ENCODE measurements at regions of chr12 and their contacts with region 1.

Region 1: GRCh38 chr12:91355150-91356006 is 172.8 kb upstream of the DCN start:
- DNase-seq: peak; percentile 68
- H3K4me3 ChIP-seq: no peak overlapping the region
- H3K27ac ChIP-seq: no peak overlapping the region
- H3K4me1 ChIP-seq: no peaks in the 10 kb centered on the region
- H3K27me3 ChIP-seq: no peaks in the 10 kb centered on the region
- CTCF ChIP-seq: peak; percentile 87

Region 2: GRCh38 chr12:90940872-90941499 is 414.4 kb before region 1 on chr12:
- CTCF ChIA-PET with region 1: interaction called, 10 read pairs
- POLR2A ChIA-PET with region 1: no interaction called
- intact Hi-C with region 1: no loop called
- DNase-seq: peak; percentile 81
- H3K4me3 ChIP-seq: no peak overlapping the region
- H3K27ac ChIP-seq: no peak overlapping the region
- H3K4me1 ChIP-seq: no peaks in the 10 kb centered on the region
- H3K27me3 ChIP-seq: no peaks in the 10 kb centered on the region
- CTCF ChIP-seq: peak; percentile 77

Region 3: DNA sequence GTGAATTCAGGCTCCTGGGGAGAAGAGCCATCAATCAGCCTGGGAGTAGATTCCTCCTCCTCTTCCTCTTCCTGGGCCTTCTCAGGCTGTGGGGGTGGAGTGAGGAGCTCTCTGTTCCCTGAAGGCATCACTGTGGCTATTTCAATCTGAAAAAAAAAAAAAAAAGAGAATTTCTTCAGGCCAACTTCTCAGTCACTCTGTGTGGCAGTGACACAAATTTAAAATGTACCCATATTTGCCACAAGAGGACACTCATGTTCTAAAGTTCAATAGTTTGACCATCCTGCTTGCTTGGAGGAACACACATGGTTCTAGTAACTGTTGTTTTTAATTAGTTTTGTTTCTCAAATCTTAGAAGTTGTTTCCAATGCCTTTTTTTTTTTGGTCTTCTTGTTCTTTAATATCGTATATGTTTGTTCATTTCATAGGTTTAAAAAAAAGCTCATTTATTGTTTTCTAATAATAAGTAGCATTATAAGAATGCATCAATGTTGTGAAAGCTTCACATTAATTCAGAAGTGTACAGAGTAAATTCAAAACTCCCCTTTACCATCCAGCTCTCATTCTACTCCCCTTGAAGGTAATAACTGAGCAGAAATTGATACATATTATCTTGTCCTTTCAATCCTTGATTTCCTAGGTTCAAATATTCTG is 377.1 kb before region 1 on chr12:
- CTCF ChIA-PET with region 1: no interaction called
- POLR2A ChIA-PET with region 1: no interaction called
- intact Hi-C with region 1: loop called (anchors 1 kb)
- DNase-seq: peak; percentile 64
- H3K4me3 ChIP-seq: no peak overlapping the region
- H3K27ac ChIP-seq: no peak overlapping the region
- H3K4me1 ChIP-seq: no peaks in the 10 kb centered on the region
- H3K27me3 ChIP-seq: no peaks in the 10 kb centered on the region
- CTCF ChIP-seq: peak; percentile 70